H1 (cell line): ENCODE measurements at regions of chr3 and their contacts with region 1.

Region 1: GRCh38 chr3:49158108-49158709 is 7.9 kb downstream of the CCDC71 start:
- DNase-seq: peak in 1 of 2 experiments; percentile 75
- H3K4me3 ChIP-seq: no peak overlapping the region
- H3K27ac ChIP-seq: no peak overlapping the region
- H3K4me1 ChIP-seq: no peaks in the 10 kb centered on the region
- H3K27me3 ChIP-seq: no peaks in the 10 kb centered on the region
- CTCF ChIP-seq: peak in 2 of 3 experiments; percentile 66 to 84; a peak in 3 of 4 replicates
- EP300 ChIP-seq: no peak
- POLR2A ChIP-seq: no peak
- RAD21 ChIP-seq: peak; percentile 77 to 86

Region 2: GRCh38 chr3:49112262-49112661 is 45.9 kb before region 1 on chr3:
- CTCF ChIA-PET with region 1: interaction called, 16 read pairs
- POLR2A ChIA-PET with region 1: interaction called, 4 read pairs
- DNase-seq: no peak
- H3K4me3 ChIP-seq: no peak overlapping the region
- H3K27ac ChIP-seq: no peak overlapping the region
- H3K4me1 ChIP-seq: no peaks in the 10 kb centered on the region
- H3K27me3 ChIP-seq: no peaks in the 10 kb centered on the region; a peak in 1 of 7 replicates
- CTCF ChIP-seq: peak in 1 of 3 experiments; percentile 15; a peak in 1 of 4 replicates
- EP300 ChIP-seq: no peak
- POLR2A ChIP-seq: no peak
- RAD21 ChIP-seq: no peak

Region 3: GRCh38 chr3:49120438-49121131 is 37.6 kb before region 1 on chr3 and contains the start of gene USP19:
- CTCF ChIA-PET with region 1: interaction called, 14 read pairs
- POLR2A ChIA-PET with region 1: interaction called, 3 read pairs
- DNase-seq: peak; percentile 84 to 96
- H3K4me3 ChIP-seq: peak within 1 kb of the TSS; percentile 83 to 92 (median 86)
- H3K27ac ChIP-seq: peak within 1 kb of the TSS; percentile 78
- H3K4me1 ChIP-seq: peaks cover 0 to 11% (median 6%) of the 10 kb centered on the region in 4 experiments; a peak in 5 of 7 replicates
- H3K27me3 ChIP-seq: no peaks in the 10 kb centered on the region
- CTCF ChIP-seq: no peak
- EP300 ChIP-seq: peak in 1 of 2 experiments; percentile 60; a peak in 1 of 3 replicates
- POLR2A ChIP-seq: peak in 1 of 2 experiments; percentile 85; a peak in 2 of 3 replicates
- RAD21 ChIP-seq: 0 out of 4 replicates have a peak, but pooled peaks of 1 of the 2 experiments have one; percentile 2
- total RNA-seq, gene USP19: 64.9 and 65.8 TPM in 2 replicates

Region 4: GRCh38 chr3:49133226-49133951 is 24.8 kb before region 1 on chr3:
- CTCF ChIA-PET with region 1: interaction called, 43 read pairs
- POLR2A ChIA-PET with region 1: interaction called, 6 read pairs
- DNase-seq: peak in 1 of 2 experiments; percentile 85
- H3K4me3 ChIP-seq: peak overlapping the region; percentile 62 to 92 (median 81)
- H3K27ac ChIP-seq: peak overlapping the region; percentile 43; the same call in 1 of the 2 replicates
- H3K4me1 ChIP-seq: peaks cover 0 to 8% (median 7%) of the 10 kb centered on the region in 4 experiments; a peak in 6 of 7 replicates
- H3K27me3 ChIP-seq: no peaks in the 10 kb centered on the region; a peak in 2 of 7 replicates
- CTCF ChIP-seq: no peak
- EP300 ChIP-seq: peak in 1 of 2 experiments; percentile 8; a peak in 1 of 3 replicates
- POLR2A ChIP-seq: no peak; a peak in 1 of 3 replicates
- RAD21 ChIP-seq: no peak

Region 5: DNA sequence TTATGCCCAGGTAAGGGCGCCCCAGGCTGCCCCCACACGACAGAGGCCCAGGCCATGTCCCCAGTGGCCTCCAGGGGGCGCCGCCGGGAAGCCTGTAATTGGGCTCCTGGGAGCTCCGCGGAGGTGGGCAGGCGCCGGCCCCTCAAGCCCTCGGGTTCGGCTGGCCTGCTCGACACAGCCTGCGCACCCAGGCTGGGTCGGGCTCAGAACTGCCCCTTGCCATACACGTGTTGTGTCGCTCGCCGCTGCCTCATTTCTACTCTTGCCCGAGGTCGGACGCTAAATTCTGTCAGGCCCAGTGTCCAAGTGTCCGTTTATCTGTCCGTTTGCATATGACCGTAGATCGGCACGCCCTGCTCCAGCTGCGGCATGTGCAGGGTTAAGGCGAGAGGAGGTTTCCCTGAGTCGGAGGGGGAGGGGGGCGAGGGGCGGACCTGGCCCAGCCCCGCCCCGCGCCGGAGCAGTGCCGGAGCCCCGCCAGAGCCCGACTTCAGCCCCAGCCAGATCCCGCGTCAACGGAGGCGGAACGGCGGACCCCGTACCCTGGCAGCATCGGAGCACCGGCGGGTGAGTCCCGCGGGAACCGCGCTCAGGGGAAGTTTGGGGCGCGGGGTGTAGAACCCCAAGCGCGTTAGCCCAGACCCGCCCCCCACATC is 13.0 kb after region 1 on chr3 and contains the start of gene KLHDC8B:
- CTCF ChIA-PET with region 1: interaction called, 38 read pairs
- POLR2A ChIA-PET with region 1: interaction called, 8 read pairs
- DNase-seq: peak; percentile 59 to 98
- H3K4me3 ChIP-seq: peak within 1 kb of the TSS; percentile 66 to 94 (median 78)
- H3K27ac ChIP-seq: no peak within 1 kb of the TSS
- H3K4me1 ChIP-seq: peaks cover 0 to 29% (median 15%) of the 10 kb centered on the region in 4 experiments; a peak in 6 of 7 replicates
- H3K27me3 ChIP-seq: peaks cover 0 to 3% (median 0%) of the 10 kb centered on the region in 4 experiments; a peak in 2 of 7 replicates
- CTCF ChIP-seq: peak in 2 of 3 experiments; percentile 88 to 95; a peak in 3 of 4 replicates
- EP300 ChIP-seq: no peak
- POLR2A ChIP-seq: no peak
- RAD21 ChIP-seq: peak; percentile 72 to 85
- total RNA-seq, gene KLHDC8B: 15.8 and 18.1 TPM in 2 replicates

Region 6: DNA sequence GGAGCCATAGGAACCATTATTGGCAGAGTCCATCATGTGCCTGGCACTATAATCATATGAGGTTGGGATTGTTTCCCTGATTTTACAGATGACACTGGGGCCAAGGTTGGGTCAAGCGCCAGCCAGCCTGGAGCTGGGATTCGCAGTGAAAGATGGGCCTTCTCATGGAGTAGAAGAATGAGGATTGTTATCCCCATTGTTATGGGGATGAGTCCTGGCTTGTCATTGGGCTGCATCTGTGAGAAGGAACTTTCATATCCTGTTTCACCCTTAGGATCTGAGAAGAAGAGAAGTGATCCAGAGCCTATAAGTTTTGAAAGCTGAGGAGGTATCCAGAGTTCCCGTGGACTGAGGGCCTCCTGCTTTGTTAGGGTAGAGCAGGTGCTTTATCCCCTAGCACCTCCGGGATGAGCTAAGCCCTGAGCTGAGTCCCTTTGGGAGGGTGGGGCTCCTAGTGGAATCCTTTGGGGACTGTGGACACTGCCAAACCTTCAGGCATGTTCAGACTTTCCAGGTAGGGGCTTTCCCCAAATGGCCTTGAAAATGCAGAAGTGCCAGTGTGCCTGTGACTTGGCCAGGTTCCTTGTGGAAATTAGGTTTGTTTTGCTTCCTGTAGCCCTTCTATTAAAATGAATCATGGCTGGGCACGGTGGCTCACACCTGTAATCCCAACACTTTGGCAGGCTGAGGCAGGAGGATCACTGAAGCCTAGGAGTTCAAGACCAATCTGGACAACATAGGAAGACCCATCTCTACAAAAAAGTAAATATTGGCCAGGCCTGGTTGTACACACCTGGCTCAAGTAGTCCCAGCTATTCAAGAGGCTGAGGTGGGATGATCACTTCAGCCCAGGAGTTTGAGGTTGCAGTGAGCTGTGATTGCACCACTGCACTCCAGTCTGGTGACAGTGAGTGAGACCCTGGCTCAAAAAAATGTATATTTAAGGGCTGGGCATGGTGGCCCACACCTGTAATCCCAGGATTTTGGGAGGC is 365.8 kb after region 1 on chr3:
- CTCF ChIA-PET with region 1: no interaction called
- POLR2A ChIA-PET with region 1: no interaction called
- DNase-seq: no peak
- H3K4me3 ChIP-seq: no peak overlapping the region
- H3K27ac ChIP-seq: peak overlapping the region; percentile 31; the same call in 1 of the 2 replicates
- H3K4me1 ChIP-seq: peaks cover 0 to 2% (median 0%) of the 10 kb centered on the region in 4 experiments; a peak in 3 of 7 replicates
- H3K27me3 ChIP-seq: no peaks in the 10 kb centered on the region
- CTCF ChIP-seq: no peak
- EP300 ChIP-seq: no peak
- POLR2A ChIP-seq: no peak
- RAD21 ChIP-seq: no peak